Astrocyte of the cerebellum (primary cell): ENCODE measurements at regions of chr3 and their contacts with region 1.

Region 1: GRCh38 chr3:38669668-38670067 is 20.2 kb upstream of the SCN5A start:
- DNase-seq: no peak
- H3K4me3 ChIP-seq: no peak overlapping the region
- CTCF ChIP-seq: no peak

Region 2: GRCh38 chr3:38614686-38615352 is 54.8 kb before region 1 on chr3:
- in situ Hi-C with region 1: loop called (anchors 5 kb)
- DNase-seq: no peak
- H3K4me3 ChIP-seq: no peak overlapping the region
- CTCF ChIP-seq: no peak